Cardiac septum (tissue), 1 donor: ENCODE measurements at regions of chr15 and their contacts with region 1.

Region 1: DNA sequence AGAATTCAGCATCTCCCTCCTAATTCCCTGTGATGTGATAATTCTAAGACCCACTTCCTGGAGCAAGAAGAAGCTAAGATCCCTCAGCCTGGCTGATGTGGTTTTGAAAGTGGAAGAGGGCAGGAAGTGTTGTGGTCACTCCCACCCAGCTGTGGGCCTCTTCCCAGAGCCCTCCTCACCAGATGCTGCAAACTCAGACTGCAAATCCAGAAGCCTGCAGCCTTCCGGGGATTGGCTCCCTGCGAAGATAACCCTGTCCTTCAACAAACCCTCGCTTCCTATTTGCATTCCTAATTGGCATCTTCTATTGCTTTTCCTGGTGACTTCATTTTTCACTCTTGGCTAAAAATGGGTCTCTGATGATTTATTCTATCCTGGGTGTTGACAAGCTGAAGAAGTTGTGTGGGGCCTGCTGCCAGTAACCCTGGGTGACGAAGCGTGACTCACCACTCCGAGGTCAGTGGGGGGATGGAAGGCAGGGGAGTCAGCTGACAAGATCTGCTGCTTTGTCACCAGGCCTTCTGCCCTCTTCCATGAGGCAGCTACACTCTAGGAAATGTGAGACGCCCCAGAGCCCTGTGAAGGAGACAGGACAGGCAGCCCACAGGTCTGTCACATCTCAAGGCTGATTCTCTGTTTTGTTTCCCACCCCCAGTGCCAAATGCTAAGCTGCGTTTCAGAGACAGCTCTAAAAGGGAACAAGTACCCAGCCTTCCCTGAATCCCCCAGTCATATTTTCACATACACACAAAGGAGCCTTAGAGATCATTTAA is 99.7 kb upstream of the LIPC start:
- DNase-seq: peak; percentile 98

Region 2: DNA sequence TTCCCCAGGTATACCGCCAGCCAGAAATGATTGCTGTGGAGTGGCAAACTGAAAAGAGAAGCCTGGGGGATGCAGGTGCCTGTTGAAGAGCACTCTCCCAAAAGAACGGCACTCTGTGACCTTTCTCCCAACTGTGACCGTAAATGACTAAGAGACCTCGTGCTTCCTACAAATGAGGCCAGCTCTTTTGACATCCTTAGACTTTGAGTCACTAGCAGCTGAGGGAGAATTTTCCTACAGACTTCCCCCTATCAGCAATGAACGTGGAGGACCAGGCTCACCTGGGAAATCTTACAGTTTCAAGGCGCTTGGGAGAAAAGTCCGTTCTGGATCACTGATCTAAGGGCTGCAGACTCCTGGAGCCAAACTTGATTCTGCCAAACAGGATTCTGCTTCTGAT is 185.3 kb before region 1 on chr15:
- intact Hi-C with region 1: no loop called
- DNase-seq: no peak

Region 3: GRCh38 chr15:58269455-58270414 is 62.4 kb before region 1 on chr15:
- intact Hi-C with region 1: loop called (anchors 5 kb)
- DNase-seq: no peak

Region 4: DNA sequence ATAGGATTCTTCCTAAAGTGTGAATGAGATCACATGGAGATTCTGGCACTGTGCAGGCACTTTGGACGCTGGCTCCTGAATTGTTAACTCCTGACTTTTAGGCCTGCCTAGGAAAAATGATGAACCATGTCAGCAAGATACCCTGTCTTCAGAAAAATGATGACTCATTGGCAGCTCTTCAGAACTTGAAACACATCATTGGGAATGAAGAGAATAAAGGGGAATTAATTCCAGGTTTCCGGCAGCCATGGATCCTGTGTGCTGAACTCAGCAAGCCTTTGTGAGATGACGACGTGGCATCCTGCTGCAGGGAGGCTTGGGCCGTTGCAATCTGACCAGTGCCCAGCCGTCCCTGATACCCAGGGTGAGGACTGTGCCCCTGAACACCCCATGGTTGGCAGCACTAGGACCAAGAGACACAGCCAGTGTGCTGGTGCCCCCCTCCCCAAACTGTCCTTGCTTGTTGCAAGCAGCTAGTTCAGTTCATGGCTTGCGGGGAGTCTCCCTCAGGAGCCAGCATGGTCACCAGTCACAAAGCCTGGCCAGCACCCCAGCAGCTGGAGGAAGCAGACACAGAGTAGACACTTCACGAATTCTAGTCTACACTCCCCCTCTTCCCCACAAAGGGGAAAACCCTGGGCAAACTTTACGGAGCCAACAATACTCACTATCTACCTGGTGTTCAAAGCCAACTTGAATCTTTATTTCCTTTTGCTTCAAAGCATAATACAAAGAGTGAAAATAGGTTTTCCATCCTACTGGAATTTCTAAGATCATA is 91.9 kb after region 1 on chr15:
- intact Hi-C with region 1: no loop called
- DNase-seq: no peak

Region 5: GRCh38 chr15:58438956-58439355 is 106.9 kb after region 1 on chr15:
- intact Hi-C with region 1: loop called (anchors 5 kb)
- DNase-seq: no peak

Region 6: GRCh38 chr15:58521293-58521991 is 189.4 kb after region 1 on chr15:
- intact Hi-C with region 1: loop called (anchors 5 kb)
- DNase-seq: peak; percentile 90

Region 7: GRCh38 chr15:58666957-58667356 is 334.9 kb after region 1 on chr15:
- intact Hi-C with region 1: loop called (anchors 5 kb)
- DNase-seq: no peak

Region 8: GRCh38 chr15:58715266-58715917 is 383.3 kb after region 1 on chr15:
- intact Hi-C with region 1: no loop called
- DNase-seq: no peak